A549 (cell line): ENCODE measurements at regions of chr11 and their contacts with region 1.

Region 1: GRCh38 chr11:59680287-59681154 is 11.7 kb upstream of the PATL1 start:
- DNase-seq: peak; percentile 75 to 89
- ATAC-seq: peak; percentile 99 to 100
- H3K4me3 ChIP-seq: no peak overlapping the region
- H3K27ac ChIP-seq: peak overlapping the region in 1 of 2 experiments; percentile 65; a peak in 2 of 6 replicates
- H3K4me1 ChIP-seq: no peaks in the 10 kb centered on the region
- CTCF ChIP-seq: peak; percentile 81
- EP300 ChIP-seq: no peak
- POLR2A ChIP-seq: no peak
- RAD21 ChIP-seq: peak; percentile 89 to 92

Region 2: GRCh38 chr11:59534676-59535075 is 145.8 kb before region 1 on chr11:
- CTCF ChIA-PET with region 1: interaction called, 13 read pairs
- POLR2A ChIA-PET with region 1: interaction called, 8 read pairs
- DNase-seq: no peak
- ATAC-seq: no peak
- H3K4me3 ChIP-seq: no peak overlapping the region
- H3K27ac ChIP-seq: no peak overlapping the region
- H3K4me1 ChIP-seq: peaks cover 6% of the 10 kb centered on the region
- CTCF ChIP-seq: no peak
- EP300 ChIP-seq: no peak
- POLR2A ChIP-seq: no peak
- RAD21 ChIP-seq: no peak

Region 3: DNA sequence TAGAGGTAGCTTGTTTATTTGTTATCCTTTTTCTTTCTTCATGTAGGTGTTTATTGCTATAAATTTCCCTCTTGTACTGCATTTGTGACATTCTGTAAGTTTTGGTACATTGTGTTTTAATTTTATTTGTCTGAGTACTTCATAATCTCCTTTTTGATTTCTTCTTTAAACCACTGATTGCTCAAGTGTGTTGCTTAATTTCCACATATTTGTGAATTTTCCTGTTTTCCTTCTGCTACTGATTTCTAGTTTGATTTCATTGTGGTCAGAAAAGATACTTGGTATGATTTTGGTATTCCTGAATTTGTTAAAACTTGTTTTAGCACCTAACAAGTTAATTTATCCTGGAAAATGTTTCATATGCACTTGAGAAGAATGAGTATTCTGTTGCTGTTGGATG is 18.0 kb after region 1 on chr11:
- CTCF ChIA-PET with region 1: interaction called, 10 read pairs
- POLR2A ChIA-PET with region 1: no interaction called
- DNase-seq: no peak
- ATAC-seq: no peak
- H3K4me3 ChIP-seq: no peak overlapping the region
- H3K27ac ChIP-seq: no peak overlapping the region
- H3K4me1 ChIP-seq: peaks cover 11% of the 10 kb centered on the region
- CTCF ChIP-seq: no peak
- EP300 ChIP-seq: no peak
- POLR2A ChIP-seq: no peak
- RAD21 ChIP-seq: no peak